ENCODE measurements at regions of chr2 and their contacts with region 1.

Region 1: DNA sequence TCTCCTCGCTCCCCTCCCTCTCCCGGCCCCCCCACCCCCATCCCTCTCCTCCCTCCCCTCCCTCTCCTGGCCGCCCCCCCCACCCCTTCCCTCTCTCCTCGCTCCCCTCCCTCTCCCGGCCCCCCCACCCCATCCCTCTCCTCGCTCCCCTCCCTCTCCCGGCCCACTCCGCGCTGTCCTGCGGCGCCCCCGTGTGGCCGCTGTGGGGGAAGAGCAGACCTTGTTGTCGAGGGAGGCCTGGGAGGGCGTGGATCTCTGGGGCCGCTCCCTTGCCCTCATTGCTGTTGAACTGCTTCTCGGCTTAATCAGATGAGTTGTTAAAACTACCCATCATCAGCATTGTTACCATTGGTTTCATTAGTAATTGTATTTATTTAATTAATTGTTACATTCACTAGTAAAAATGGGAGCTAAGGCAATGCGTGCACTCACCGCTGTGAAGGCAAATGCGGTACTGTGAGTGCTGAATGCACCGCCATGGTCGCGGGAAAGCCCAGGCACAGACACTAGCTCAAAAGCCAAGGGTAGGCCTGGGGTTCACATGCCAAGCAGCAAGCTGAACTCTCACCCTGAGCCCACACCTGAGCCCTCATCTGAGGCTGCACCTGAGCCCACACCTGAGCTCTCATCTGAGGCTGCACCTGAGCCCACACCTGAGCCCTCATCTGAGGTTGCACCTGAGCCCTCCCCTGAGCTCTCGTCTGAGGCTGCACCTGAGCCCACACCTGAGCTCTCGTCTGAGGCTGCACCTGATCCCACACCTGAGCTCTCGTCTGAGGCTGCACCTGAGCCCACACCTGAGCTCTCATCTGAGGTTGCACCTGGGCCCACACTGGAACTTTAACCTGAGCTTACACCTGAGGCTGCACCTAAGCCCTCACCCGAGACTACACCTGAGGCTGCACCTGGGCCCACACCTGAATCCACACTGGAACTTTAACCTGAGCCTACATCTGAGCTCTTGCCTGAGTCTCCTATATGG is 8.8 kb downstream of the RTP5 start:
- DNase-seq: peak; percentile 83
- H3K4me3 ChIP-seq: no peak overlapping the region
- H3K27ac ChIP-seq: no peak overlapping the region
- H3K4me1 ChIP-seq: no peaks in the 10 kb centered on the region
- H3K27me3 ChIP-seq: no peaks in the 10 kb centered on the region
- CTCF ChIP-seq: peak; percentile 44

Region 2: DNA sequence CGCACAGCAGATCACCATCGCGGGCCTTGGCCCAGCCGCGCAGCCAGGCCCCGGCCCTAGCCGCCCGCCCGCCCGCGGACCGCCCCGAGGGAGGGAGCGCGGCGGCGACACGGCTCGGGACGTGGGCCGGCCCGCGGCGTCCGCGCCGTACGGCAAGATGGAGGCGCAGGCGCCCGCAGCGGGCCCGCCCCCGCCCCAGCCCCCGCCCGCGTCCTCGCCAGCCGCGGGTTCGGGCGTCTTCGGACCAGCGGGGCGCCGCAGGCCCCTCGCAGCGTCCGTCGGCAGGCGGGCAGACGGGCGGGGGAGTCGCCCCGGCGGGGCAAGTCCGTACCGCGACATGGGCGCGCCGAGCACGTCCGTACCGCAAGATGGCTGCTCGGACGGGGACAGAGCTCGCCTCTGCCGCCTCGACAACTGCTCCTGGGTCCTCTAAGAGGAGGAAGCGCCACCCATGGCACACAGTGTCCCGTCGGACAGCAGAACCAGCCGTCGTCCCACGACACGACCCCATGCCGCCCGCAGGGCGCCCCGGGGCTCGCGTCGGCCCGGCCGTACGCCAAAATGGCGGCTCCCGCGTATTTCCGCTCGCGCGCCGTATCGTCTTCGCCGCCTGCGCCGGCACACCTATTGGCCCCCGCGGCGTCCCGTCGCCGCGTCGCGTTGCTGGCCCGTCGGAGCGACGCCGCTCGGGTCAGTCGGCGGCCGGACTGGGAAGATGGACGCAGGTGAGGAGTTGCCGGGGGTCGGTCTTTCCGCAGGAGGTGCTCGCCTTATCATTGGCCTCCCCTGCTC is 241.1 kb before region 1 on chr2 and contains the starts of genes ATG4B and THAP4:
- intact Hi-C with region 1: no loop called
- DNase-seq: peak; percentile 85
- H3K4me3 ChIP-seq: peak within 1 kb of the TSS; percentile 91
- H3K27ac ChIP-seq: peak within 1 kb of the TSS; percentile 96
- H3K4me1 ChIP-seq: peaks cover 11% of the 10 kb centered on the region
- H3K27me3 ChIP-seq: no peaks in the 10 kb centered on the region
- CTCF ChIP-seq: no peak
- total RNA-seq, gene ATG4B: 72.4 to 119 TPM
- total RNA-seq, gene THAP4: 66.6 to 68.0 TPM

Region 3: GRCh38 chr2:241702132-241703031 is 175.9 kb before region 1 on chr2:
- intact Hi-C with region 1: loop called (anchors 10 kb)
- DNase-seq: peak; percentile 84
- H3K4me3 ChIP-seq: peak overlapping the region; percentile 98
- H3K27ac ChIP-seq: peak overlapping the region; percentile 80
- H3K4me1 ChIP-seq: peaks cover 12% of the 10 kb centered on the region
- H3K27me3 ChIP-seq: no peaks in the 10 kb centered on the region
- CTCF ChIP-seq: peak; percentile 39

Region 4: DNA sequence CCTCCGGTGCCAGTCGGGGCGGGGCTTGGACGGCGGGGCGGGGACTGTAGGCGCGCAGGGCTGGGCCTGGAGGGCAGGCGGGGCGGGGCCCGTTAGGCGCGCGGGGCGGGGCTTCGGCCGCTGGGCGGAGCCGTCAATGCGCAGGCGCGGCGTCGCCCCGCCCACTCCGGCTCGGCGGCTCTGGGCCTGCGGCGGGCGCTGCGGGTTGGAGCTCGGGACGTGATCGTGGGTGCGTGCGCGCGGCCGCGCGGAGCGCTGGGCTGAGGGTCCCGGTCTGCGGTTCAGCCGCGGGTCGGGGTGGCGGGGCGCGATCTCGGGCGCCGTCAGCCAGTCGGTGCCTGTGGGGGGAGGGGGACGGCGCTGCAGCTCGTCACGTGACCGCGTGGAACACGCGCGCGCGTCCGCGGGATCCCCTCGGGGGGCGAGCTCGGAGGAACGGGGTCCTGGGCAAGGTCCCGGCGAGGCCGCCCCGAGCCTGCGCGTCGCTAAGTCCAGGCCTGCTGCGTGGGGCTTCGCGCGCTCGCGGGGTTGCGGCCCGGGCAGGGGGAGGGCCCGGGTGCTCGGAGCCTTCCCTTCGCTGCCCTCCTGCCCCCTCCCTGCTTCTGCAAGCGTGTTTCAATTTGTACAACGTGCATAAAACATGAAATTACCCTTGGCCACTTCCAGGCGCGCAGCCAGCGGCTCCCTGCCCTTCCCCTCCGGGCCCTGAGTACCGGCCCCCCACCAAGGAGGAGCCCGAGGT is 143.6 kb before region 1 on chr2 and contains the start of gene D2HGDH:
- intact Hi-C with region 1: loop called (anchors 10 kb)
- DNase-seq: peak; percentile 97
- H3K4me3 ChIP-seq: peak within 1 kb of the TSS; percentile 96
- H3K27ac ChIP-seq: peak within 1 kb of the TSS; percentile 98
- H3K4me1 ChIP-seq: peaks cover 6% of the 10 kb centered on the region
- H3K27me3 ChIP-seq: no peaks in the 10 kb centered on the region
- CTCF ChIP-seq: no peak
- total RNA-seq, gene D2HGDH: 42.0 to 76.6 TPM

Measured in colonic mucosa (tissue), 4 donors.